A549 (cell line): ENCODE measurements at regions of chr9 and their contacts with region 1.

Region 1: DNA sequence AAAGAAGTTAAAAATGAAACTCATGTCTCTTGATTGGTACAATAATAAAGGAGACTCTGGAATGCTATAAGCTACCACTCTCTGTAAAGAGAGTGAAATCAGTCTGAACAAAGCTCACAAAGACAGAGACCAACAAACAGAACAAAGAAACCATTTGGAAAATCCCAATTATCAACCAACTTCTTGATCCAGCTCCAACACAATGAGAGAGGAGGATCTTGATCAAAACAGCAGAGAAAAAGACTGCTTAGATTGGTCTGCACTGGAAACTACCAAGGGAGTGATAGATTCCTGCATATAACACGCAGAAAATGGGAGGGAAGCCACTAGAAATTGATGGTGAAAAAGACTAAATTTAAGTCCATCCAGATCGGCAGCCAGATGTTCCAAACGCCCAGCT is 23.1 kb upstream of the RNF38 start:
- DNase-seq: no peak
- ATAC-seq: no peak
- H3K4me3 ChIP-seq: no peak overlapping the region
- H3K27ac ChIP-seq: no peak overlapping the region
- H3K4me1 ChIP-seq: peaks cover 37% of the 10 kb centered on the region
- CTCF ChIP-seq: no peak
- EP300 ChIP-seq: no peak
- POLR2A ChIP-seq: no peak
- RAD21 ChIP-seq: no peak

Region 2: GRCh38 chr9:36364577-36364976 is 58.6 kb before region 1 on chr9:
- CTCF ChIA-PET with region 1: no interaction called
- POLR2A ChIA-PET with region 1: no interaction called
- DNase-seq: no peak
- ATAC-seq: no peak
- H3K4me3 ChIP-seq: no peak overlapping the region
- H3K27ac ChIP-seq: no peak overlapping the region
- H3K4me1 ChIP-seq: no peaks in the 10 kb centered on the region
- CTCF ChIP-seq: no peak
- EP300 ChIP-seq: no peak
- POLR2A ChIP-seq: no peak
- RAD21 ChIP-seq: no peak

Region 3: GRCh38 chr9:36441966-36442365 is 18.8 kb after region 1 on chr9:
- CTCF ChIA-PET with region 1: interaction called, 10 read pairs
- POLR2A ChIA-PET with region 1: no interaction called
- DNase-seq: no peak
- ATAC-seq: no peak
- H3K4me3 ChIP-seq: no peak overlapping the region
- H3K27ac ChIP-seq: no peak overlapping the region
- H3K4me1 ChIP-seq: no peaks in the 10 kb centered on the region
- CTCF ChIP-seq: no peak
- EP300 ChIP-seq: no peak
- POLR2A ChIP-seq: no peak
- RAD21 ChIP-seq: no peak

Region 4: DNA sequence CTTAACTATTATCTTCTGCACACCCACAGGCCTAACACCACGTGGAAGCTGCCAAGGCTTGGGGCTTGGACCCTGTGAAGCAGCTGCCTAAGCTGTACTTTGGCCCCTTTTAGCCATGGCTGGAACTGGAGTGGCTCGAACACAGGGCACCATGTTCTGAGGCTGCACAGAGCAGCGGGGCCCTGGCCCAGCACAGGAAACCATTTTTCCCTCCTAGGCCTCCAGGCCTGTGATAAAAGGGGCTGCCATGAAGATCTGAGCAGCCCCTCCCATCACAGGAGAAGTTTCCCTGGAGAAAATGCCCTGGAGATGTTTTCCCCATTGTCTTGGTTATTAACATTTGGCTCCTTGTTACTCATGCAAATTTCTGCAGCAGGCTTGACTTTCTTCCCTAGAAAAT is 275.8 kb after region 1 on chr9:
- CTCF ChIA-PET with region 1: no interaction called
- POLR2A ChIA-PET with region 1: no interaction called
- DNase-seq: no peak
- ATAC-seq: no peak
- H3K4me3 ChIP-seq: no peak overlapping the region
- H3K27ac ChIP-seq: no peak overlapping the region
- H3K4me1 ChIP-seq: no peaks in the 10 kb centered on the region
- CTCF ChIP-seq: no peak
- EP300 ChIP-seq: no peak
- POLR2A ChIP-seq: no peak
- RAD21 ChIP-seq: no peak